Ascending aorta (tissue), 2 donors: ENCODE measurements at regions of chr2 and their contacts with region 1.

Region 1: DNA sequence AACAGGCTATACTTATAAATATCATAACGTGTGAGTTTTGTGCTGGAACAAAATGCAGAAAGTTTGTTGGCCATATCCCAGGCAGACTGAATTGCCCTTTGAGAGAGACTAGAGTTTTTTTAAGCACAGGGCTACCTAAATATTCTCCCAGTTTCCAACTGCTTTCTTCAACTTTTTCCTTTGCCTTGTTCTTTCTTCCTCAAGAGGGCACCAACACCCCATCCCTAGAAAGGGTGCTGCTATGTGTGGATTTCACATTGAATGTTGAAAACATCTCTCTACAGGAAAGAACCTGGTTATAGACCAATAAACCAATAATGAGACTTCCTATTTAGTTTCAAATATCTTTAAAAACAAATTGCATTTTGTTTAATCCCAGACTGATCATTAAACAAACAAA is 87.9 kb downstream of the ICOS start:
- DNase-seq: peak in 1 of 2 donors; percentile 67
- H3K4me3 ChIP-seq: no peak overlapping the region
- H3K27ac ChIP-seq: peak overlapping the region; percentile 52 to 57
- H3K4me1 ChIP-seq: peaks cover 0 to 2% of the 10 kb centered on the region in 2 donors
- H3K27me3 ChIP-seq: no peaks in the 10 kb centered on the region
- CTCF ChIP-seq: peak; percentile 56 to 74 (median 72)

Region 2: DNA sequence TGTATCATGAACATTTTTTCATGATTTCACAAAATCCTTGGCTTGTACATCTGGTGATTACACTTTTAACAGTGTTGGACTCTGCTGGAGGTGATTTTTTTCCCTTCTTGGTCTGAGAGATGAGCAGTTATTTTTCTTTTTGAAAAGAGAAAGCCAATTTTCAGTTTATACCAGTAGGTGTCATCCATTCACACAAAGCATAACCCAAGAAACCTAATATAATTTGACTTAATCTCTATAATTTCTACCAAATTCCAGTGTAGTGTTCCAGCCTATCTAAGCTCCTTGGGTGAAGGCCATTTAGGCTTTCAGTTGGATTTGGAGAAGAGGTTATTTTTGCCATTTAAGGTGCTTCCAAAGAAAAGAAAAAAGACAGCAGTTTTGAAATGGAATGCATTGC is 95.7 kb before region 1 on chr2:
- intact Hi-C with region 1: loop called (anchors 5 kb)
- DNase-seq: no peak
- H3K4me3 ChIP-seq: no peak overlapping the region
- H3K27ac ChIP-seq: no peak overlapping the region
- H3K4me1 ChIP-seq: peaks cover 0 to 9% of the 10 kb centered on the region in 2 donors
- H3K27me3 ChIP-seq: no peaks in the 10 kb centered on the region
- CTCF ChIP-seq: peak in 2 of 3 experiments; percentile 22 to 48

Region 3: DNA sequence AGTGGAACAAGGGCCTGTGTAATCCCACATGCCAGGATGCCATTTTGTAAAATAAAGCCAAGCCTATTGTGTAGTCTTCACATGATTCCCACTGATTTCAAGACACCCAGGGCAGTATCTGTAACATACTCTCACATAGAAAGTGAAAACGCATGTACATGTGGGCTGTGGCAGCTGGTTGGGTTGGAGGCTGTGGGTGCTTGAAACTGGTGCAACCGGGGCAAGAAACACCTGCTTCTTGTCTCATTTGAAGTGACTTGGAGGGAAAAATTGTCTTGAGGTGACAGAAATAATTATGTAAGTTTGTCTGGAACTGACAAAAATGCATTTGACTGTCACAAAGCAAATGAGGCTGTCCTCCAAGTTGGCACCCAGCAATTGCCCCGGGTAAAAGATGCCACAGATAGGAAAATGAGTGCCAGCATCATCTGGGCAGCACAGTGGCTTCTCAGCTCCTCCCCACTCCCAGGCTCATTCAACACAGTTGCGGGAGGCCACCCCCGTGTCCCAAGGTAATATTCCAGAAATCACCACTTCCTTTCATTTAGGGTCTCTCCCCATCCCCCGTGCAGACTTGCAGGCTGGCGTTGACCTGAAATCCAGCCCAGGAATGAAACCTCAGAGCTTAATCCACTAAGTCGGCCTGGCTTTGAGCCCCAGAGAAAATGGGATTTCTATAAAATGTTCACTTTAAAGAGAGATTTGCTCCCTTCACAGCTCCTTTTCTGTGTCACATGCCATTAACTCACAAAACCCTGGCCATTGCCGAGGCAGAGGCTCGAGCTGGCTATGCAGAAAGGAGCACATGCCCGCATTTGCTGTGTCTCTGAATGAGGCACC is 226.9 kb after region 1 on chr2:
- intact Hi-C with region 1: loop called (anchors 5 kb)
- DNase-seq: no peak
- H3K4me3 ChIP-seq: no peak overlapping the region
- H3K27ac ChIP-seq: no peak overlapping the region
- H3K4me1 ChIP-seq: peaks cover 0 to under 1% of the 10 kb centered on the region in 2 donors
- H3K27me3 ChIP-seq: no peaks in the 10 kb centered on the region
- CTCF ChIP-seq: no peak

Region 4: DNA sequence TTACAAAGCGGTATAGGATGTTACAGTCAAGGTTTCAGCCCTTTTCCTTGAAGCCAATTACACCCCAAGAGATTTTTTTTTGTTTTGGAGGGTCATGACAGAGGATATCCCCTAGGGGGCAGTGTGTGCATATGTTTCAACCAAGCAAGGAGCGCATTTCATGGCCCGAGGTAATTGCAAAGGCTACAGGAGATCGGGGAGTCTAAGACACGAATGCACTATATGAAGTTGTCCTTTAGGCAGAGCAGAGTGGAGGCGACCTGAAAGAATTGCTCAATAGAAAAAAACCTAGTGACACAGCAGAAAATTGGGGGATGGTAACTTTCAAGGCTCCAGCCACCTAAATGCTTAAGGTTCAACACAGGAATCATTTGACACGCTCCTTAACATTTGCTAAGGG is 301.0 kb after region 1 on chr2:
- intact Hi-C with region 1: loop called (anchors 5 kb)
- DNase-seq: peak in 1 of 2 donors; percentile 69
- H3K4me3 ChIP-seq: no peak overlapping the region
- H3K27ac ChIP-seq: no peak overlapping the region
- H3K4me1 ChIP-seq: peaks cover 0 to 2% of the 10 kb centered on the region in 2 donors
- H3K27me3 ChIP-seq: no peaks in the 10 kb centered on the region
- CTCF ChIP-seq: peak; percentile 73 to 84 (median 78)

Region 5: GRCh38 chr2:204545023-204545860 is 520.7 kb after region 1 on chr2 and contains the start of gene PARD3B:
- intact Hi-C with region 1: loop called (anchors 10 kb)
- DNase-seq: peak in 1 of 2 donors; percentile 70
- H3K4me3 ChIP-seq: peak within 1 kb of the TSS; percentile 99
- H3K27ac ChIP-seq: peak within 1 kb of the TSS; percentile 91
- H3K4me1 ChIP-seq: peaks cover 0 to 9% of the 10 kb centered on the region in 2 donors
- H3K27me3 ChIP-seq: no peaks in the 10 kb centered on the region
- CTCF ChIP-seq: no peak
- total RNA-seq, gene PARD3B: 9.5 TPM

Region 6: DNA sequence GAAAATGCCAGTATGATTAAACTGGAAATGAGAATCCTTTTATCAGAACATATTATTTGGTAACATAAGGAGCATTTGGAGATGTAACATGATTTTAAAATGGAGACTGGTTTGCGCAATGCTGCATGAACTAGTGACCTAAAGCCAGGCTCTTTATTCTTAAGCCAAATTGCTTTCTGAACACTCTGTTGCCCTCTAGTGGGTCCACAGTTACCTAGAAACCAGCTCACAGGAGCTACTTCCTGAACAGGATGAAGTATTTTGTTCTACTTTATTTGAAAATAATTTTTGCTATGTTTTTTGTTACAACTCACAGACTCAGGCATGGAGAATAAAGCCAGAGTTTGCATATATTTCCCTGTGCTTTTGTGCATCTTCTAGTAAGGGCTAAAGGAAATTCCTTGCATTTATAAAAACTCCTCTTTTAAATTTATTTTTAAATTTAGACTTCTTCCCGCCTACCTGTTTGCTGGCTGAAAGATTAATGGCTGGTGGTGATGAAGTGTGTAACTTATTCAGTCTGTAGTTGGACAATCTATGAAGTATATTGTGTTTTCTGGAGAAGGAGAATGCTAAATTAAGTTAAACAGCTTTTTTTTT is 667.5 kb after region 1 on chr2:
- intact Hi-C with region 1: loop called (anchors 5 kb)
- DNase-seq: peak in 1 of 2 donors; percentile 70
- H3K4me3 ChIP-seq: no peak overlapping the region
- H3K27ac ChIP-seq: no peak overlapping the region
- H3K4me1 ChIP-seq: peaks cover 0 to 13% of the 10 kb centered on the region in 2 donors
- H3K27me3 ChIP-seq: no peaks in the 10 kb centered on the region
- CTCF ChIP-seq: peak; percentile 42 to 78 (median 65)

Region 7: GRCh38 chr2:205680067-205680466 is 1655.6 kb after region 1 on chr2:
- intact Hi-C with region 1: loop called (anchors 10 kb)
- DNase-seq: peak in 1 of 2 donors; percentile 77
- H3K4me3 ChIP-seq: no peak overlapping the region
- H3K27ac ChIP-seq: no peak overlapping the region
- H3K4me1 ChIP-seq: peaks cover 0 to 10% of the 10 kb centered on the region in 2 donors
- H3K27me3 ChIP-seq: no peaks in the 10 kb centered on the region
- CTCF ChIP-seq: peak; percentile 50 to 68 (median 65)